A549 (cell line): ENCODE measurements at regions of chr2 and their contacts with region 1.

Region 1: GRCh38 chr2:175282290-175282689 is 100.8 kb upstream of the ATP5MC3 start:
- DNase-seq: peak; percentile 32 to 64
- ATAC-seq: peak; percentile 85 to 93
- H3K4me3 ChIP-seq: no peak overlapping the region
- H3K27ac ChIP-seq: no peak overlapping the region
- H3K4me1 ChIP-seq: no peaks in the 10 kb centered on the region
- CTCF ChIP-seq: peak; percentile 56
- EP300 ChIP-seq: no peak
- POLR2A ChIP-seq: no peak
- RAD21 ChIP-seq: peak; percentile 57 to 60

Region 2: GRCh38 chr2:175203621-175204496 is 78.4 kb before region 1 on chr2:
- CTCF ChIA-PET with region 1: interaction called, 23 read pairs
- POLR2A ChIA-PET with region 1: no interaction called
- DNase-seq: peak; percentile 21 to 67
- ATAC-seq: peak; percentile 99 to 100
- H3K4me3 ChIP-seq: no peak overlapping the region
- H3K27ac ChIP-seq: no peak overlapping the region
- H3K4me1 ChIP-seq: no peaks in the 10 kb centered on the region
- CTCF ChIP-seq: peak; percentile 58
- EP300 ChIP-seq: no peak
- POLR2A ChIP-seq: no peak
- RAD21 ChIP-seq: peak; percentile 68 to 71

Region 3: DNA sequence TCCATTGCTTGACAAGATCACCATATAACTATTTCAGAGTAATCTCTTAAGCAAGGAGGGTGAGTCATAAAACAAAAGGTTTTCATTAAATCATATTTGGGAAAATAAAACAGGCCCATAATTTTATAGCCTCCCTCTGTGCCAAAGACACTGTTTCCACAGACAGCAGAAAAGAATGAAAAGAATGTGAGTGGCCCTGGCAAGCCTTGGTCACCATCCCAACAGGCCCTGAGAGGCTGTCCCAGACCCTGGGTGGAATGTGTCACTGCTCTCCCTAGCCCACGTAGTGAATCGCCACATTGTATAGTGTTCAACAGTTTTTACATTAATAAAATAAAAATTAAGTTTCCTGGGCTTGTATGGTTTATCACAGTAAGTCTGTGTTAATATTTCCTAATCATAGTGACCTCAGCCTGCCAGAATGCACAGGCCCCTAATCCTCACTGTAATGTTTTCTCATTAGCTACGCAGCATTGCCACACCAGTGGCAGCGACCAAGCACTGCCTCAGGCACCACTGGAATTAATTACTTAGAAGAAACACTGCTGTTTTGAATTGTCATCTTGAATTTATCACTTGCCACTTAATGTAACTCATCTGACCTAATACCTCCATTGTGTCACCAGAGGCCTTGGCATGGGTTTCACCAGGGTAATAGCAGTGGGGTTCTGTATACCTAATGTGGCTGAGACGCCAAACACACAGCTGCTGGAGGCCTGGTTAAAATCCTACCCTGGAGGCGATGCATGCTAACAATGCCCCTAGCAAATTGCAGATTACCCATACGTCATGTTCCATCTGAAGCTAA is 317.9 kb after region 1 on chr2:
- CTCF ChIA-PET with region 1: no interaction called
- POLR2A ChIA-PET with region 1: no interaction called
- DNase-seq: no peak
- ATAC-seq: no peak
- H3K4me3 ChIP-seq: no peak overlapping the region
- H3K27ac ChIP-seq: no peak overlapping the region
- H3K4me1 ChIP-seq: no peaks in the 10 kb centered on the region
- CTCF ChIP-seq: no peak
- EP300 ChIP-seq: no peak
- POLR2A ChIP-seq: no peak
- RAD21 ChIP-seq: no peak

Region 4: DNA sequence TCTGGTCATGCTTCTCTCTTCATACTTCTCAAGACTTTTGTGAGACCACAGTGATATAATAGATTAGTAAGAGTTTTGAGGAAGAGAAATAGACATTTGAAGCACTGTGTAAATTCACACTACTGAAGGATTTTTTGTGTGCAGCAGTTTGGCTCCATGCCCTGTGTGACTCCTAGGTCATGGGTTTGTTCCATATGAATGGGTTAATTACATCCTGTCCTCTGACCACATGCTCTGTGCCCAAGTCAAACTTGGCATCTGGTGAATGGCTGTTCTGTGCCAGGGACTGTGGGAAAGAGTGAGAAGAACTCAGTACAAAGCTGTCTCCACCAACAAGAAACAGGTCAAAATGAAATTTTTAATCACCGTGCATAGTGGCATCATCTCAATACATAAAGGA is 415.8 kb after region 1 on chr2:
- CTCF ChIA-PET with region 1: no interaction called
- POLR2A ChIA-PET with region 1: no interaction called
- DNase-seq: no peak
- ATAC-seq: no peak
- H3K4me3 ChIP-seq: no peak overlapping the region
- H3K27ac ChIP-seq: no peak overlapping the region
- H3K4me1 ChIP-seq: no peaks in the 10 kb centered on the region
- CTCF ChIP-seq: no peak
- EP300 ChIP-seq: no peak
- POLR2A ChIP-seq: no peak
- RAD21 ChIP-seq: no peak